ENCODE measurements at regions of chr1 and their contacts with region 1.

Region 1: GRCh38 chr1:119275145-119276134 is 93.1 kb upstream of the HAO2 start:
- DNase-seq: no peak
- ATAC-seq: peak; percentile 47

Region 2: GRCh38 chr1:119367427-119368124 is 92.1 kb after region 1 on chr1:
- intact Hi-C with region 1: loop called (anchors 10 kb)
- DNase-seq: no peak
- ATAC-seq: no peak

Region 3: DNA sequence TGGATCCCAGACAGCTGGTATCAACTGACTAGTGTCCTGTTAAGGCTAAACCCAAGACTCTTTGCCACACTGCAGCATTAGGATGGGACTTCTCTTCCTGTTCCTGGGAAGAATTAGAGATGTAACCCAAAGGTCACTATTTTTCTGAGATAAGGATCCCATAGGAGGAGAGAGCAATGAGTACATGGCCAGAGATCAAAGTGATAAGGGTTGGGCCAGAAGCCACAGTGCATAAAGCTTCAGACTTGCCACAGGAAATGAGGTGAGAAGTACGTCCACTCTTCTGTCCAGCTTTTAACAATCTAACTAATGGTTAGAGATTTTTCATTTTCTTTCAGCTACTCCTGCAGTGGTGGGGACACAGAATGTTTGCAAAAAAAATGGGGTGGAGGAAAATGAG is 231.5 kb after region 1 on chr1 and contains the start of gene HSD3B1:
- intact Hi-C with region 1: no loop called
- DNase-seq: no peak
- ATAC-seq: no peak
- total RNA-seq, gene HSD3B1: not detected

Measured in left ventricle myocardium superior (tissue), 1 donor.